Dendritic cell treated with granulocyte-macrophage colony-stimulating factor and Interleukin-4, amounts not matched to agents 40 ng/mL and 50 ng/mL, for 4 days (primary cell): ENCODE measurements at regions of chr22 and their contacts with region 1.

Region 1: GRCh38 chr22:44068422-44069191 is 44.5 kb downstream of the PARVB start:
- H3K4me3 Mint-ChIP-seq: peak overlapping the region; percentile 70
- H3K27ac Mint-ChIP-seq: peak overlapping the region; percentile 99
- H3K4me1 Mint-ChIP-seq: peaks cover 61% of the 10 kb centered on the region
- H3K27me3 Mint-ChIP-seq: peaks cover 2% of the 10 kb centered on the region

Region 2: DNA sequence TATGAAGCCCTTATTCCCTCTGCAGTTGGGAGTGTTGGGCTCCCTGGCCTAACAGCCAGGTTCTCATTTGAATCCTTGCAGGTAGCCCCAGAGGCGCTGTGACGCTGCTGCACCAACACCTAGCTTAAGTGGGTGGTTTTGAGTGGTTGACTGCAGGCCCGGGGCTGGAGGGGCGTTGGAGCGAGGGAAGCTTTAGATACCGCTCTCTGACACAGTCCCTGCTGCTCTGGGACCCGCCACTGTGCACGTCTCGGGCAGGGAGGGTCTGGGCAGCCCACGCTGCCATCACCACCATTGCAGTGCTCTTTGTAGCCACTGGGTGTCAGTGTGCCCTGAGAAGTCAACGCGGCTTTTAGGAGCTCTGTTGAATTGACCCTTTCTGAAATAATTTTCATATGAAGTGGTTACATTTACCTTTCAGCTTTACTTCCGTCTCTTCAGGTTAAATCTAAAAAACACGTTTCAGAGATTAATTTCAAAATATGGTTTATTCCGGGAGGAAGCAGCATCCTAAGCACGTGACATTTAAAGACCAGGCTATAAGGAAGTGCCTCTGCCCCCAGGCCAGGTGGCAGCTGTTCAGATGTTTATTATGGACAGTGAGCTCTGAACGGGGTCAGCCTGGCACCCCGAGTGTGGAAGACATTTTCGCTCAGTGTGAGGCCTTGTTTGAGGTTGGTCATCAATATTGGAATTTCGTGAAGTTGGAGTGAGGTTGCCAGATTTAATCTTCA is 75.4 kb before region 1 on chr22:
- intact Hi-C with region 1: loop called (anchors 5 kb)
- H3K4me3 Mint-ChIP-seq: no peak overlapping the region
- H3K27ac Mint-ChIP-seq: peak overlapping the region; percentile 82
- H3K4me1 Mint-ChIP-seq: peaks cover 41% of the 10 kb centered on the region
- H3K27me3 Mint-ChIP-seq: no peaks in the 10 kb centered on the region

Region 3: DNA sequence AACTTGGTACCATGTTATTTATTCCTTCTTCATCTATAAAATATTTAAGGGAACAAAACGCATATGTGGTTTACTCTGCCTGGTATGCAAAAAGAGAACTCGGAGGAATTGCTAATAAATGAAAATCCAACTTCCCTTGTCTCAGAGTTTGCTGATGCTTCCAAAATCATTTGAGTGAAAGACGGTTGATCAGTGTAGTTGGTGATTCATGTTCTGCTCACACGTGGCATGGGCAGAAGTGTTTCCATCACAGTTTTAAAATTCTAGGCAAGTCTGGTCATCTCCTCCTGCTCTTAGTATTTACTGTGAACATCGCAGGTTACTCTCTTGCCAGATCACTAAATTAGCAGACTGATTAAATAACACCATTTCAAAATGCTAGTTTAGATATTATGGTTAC is 56.4 kb before region 1 on chr22:
- intact Hi-C with region 1: loop called (anchors 5 kb)
- H3K4me3 Mint-ChIP-seq: no peak overlapping the region
- H3K27ac Mint-ChIP-seq: peak overlapping the region; percentile 91
- H3K4me1 Mint-ChIP-seq: peaks cover 24% of the 10 kb centered on the region
- H3K27me3 Mint-ChIP-seq: no peaks in the 10 kb centered on the region

Region 4: GRCh38 chr22:44026630-44027511 is 41.7 kb before region 1 on chr22:
- intact Hi-C with region 1: loop called (anchors 1 kb)
- H3K4me3 Mint-ChIP-seq: peak overlapping the region; percentile 82
- H3K27ac Mint-ChIP-seq: peak overlapping the region; percentile 100
- H3K4me1 Mint-ChIP-seq: peaks cover 87% of the 10 kb centered on the region
- H3K27me3 Mint-ChIP-seq: no peaks in the 10 kb centered on the region

Region 5: DNA sequence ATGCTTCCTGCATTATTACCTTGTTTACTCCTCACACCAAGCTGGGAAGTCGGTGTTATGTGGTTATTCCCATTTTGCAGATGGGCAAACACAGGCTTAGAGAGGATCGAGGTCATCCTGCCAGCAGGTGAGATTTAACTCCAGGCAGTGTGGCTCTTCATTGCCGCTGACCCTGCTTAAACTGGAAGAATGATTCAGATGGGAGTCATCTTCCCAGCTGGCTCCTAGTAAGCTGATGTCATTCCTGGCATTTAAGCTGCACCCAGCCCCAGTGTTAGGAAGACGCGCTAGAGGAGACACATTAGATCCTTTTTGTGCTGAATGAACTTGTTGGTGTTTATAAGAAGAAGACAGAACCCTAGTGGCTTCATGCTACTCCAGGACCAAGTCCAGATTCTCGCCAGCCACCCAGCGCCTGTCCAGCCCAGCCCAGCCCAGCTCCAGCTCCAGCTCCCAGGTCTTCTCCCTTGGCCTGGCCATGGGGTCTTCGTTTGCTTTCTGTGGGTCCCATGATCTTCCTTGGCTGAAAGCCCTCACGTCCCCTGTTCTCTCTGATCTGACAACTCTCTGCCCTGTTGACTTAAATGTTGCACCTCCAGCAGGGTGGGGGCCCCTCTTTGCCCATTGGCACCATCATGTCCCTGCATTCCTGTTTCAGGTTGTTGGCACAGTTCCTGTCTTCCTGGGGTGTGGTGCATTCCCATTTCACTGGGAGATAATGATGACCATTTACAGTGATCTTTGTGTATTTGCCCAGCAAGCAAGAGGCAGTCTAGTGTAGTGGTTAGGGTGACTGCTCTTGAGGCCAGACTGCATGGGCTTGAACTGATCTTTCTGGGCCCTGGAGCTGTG is 30.9 kb before region 1 on chr22:
- intact Hi-C with region 1: no loop called
- H3K4me3 Mint-ChIP-seq: no peak overlapping the region
- H3K27ac Mint-ChIP-seq: peak overlapping the region; percentile 30
- H3K4me1 Mint-ChIP-seq: peaks cover 22% of the 10 kb centered on the region
- H3K27me3 Mint-ChIP-seq: no peaks in the 10 kb centered on the region

Region 6: DNA sequence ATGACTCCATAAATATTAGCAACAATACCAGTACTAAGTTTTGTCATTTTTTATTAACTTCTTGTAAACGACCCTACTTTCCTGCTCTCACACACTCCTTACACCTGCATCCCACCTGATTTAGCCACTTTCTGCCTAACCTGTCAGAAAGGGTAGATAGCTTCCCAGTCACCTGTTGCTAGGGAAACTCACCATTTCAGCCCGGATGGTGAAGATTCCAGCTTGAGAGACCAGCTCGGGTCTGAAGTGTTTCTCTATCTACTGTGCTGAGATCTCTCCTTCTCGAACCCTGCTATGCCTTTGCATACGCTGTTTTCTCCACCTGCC is 112.1 kb after region 1 on chr22 and contains the start of gene PARVG:
- intact Hi-C with region 1: loop called (anchors 5 kb)
- H3K4me3 Mint-ChIP-seq: peak within 1 kb of the TSS; percentile 92
- H3K27ac Mint-ChIP-seq: peak within 1 kb of the TSS; percentile 91
- H3K4me1 Mint-ChIP-seq: peaks cover 53% of the 10 kb centered on the region
- H3K27me3 Mint-ChIP-seq: no peaks in the 10 kb centered on the region